CD8-positive, alpha-beta T cell (primary cell): ENCODE measurements at regions of chr21 and their contacts with region 1.

Region 1: GRCh38 chr21:43916691-43917514 is 51.9 kb downstream of the AGPAT3 start:
- DNase-seq: peak; percentile 50 to 90 (median 75)
- ATAC-seq: peak; percentile 83
- H3K4me3 ChIP-seq: peak overlapping the region; percentile 51 to 61
- H3K4me3 Mint-ChIP-seq: peak overlapping the region; percentile 81
- H3K27ac ChIP-seq: peak overlapping the region; percentile 82 to 87
- H3K27ac Mint-ChIP-seq: peak overlapping the region; percentile 94
- H3K4me1 ChIP-seq: peaks cover 44% of the 10 kb centered on the region
- H3K4me1 Mint-ChIP-seq: peaks cover 55% of the 10 kb centered on the region
- H3K27me3 ChIP-seq: peaks cover 0 to 2% of the 10 kb centered on the region in 2 experiments
- H3K27me3 Mint-ChIP-seq: no peaks in the 10 kb centered on the region
- CTCF ChIP-seq: no peak

Region 2: GRCh38 chr21:43758111-43758641 is 158.7 kb before region 1 on chr21:
- CTCF ChIA-PET with region 1: no interaction called
- POLR2A ChIA-PET with region 1: no interaction called
- intact Hi-C with region 1: no loop called
- DNase-seq: no peak
- ATAC-seq: no peak
- H3K4me3 ChIP-seq: no peak overlapping the region
- H3K4me3 Mint-ChIP-seq: no peak overlapping the region
- H3K27ac ChIP-seq: no peak overlapping the region
- H3K27ac Mint-ChIP-seq: no peak overlapping the region
- H3K4me1 ChIP-seq: no peaks in the 10 kb centered on the region
- H3K4me1 Mint-ChIP-seq: no peaks in the 10 kb centered on the region
- H3K27me3 ChIP-seq: no peaks in the 10 kb centered on the region
- H3K27me3 Mint-ChIP-seq: no peaks in the 10 kb centered on the region
- CTCF ChIP-seq: no peak

Region 3: GRCh38 chr21:43810505-43811261 is 106.2 kb before region 1 on chr21:
- CTCF ChIA-PET with region 1: interaction called, 5 read pairs
- POLR2A ChIA-PET with region 1: no interaction called
- intact Hi-C with region 1: loop called in 1 of 2 experiments (anchors 5 kb)
- DNase-seq: peak; percentile 81 to 93 (median 84)
- ATAC-seq: peak; percentile 98
- H3K4me3 ChIP-seq: no peak overlapping the region
- H3K4me3 Mint-ChIP-seq: no peak overlapping the region
- H3K27ac ChIP-seq: no peak overlapping the region
- H3K27ac Mint-ChIP-seq: no peak overlapping the region
- H3K4me1 ChIP-seq: peaks cover 9% of the 10 kb centered on the region
- H3K4me1 Mint-ChIP-seq: peaks cover 7% of the 10 kb centered on the region
- H3K27me3 ChIP-seq: no peaks in the 10 kb centered on the region
- H3K27me3 Mint-ChIP-seq: no peaks in the 10 kb centered on the region
- CTCF ChIP-seq: peak; percentile 86

Region 4: DNA sequence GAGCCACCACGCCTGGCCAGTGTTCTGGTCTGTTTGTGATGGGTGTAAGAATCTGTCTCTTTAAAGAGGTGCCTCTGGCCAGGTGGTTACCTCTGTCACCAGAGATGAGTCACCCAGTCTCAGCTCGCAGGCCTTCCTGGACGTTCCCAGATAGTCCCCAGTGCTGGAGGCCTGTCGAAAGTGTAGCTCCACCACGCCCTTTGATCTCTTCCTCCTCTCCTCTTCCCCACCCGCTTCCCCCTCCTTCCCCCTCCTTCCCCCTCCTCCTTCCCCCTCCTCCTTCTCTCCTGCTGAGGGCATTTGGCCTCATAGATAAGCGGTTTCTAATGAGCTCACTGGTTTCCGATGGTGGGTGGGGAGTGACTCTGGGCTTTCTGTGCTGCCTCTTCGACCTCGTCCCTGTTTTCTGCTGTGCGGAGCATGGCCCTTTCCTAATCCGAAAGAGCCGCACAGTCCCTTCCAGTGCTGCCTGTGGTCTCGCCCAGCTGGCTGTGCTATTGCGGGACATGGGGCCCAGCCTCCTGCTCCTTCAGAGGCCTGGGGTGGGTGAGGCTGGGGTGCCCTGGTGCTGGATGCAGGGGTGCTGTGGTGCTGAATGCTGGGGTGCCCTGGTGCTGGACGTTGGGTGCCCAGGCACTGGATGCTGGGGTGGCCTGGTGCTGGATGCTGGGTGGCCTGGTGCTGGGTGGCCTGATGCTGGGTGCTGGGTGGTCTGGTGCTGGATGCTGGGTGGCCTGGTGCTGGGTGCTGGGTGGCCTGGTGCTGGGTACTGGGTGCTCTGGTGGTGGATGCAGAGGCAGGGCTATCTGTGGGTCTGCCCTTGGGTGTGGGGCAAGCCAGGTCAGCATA is 32.7 kb before region 1 on chr21:
- CTCF ChIA-PET with region 1: no interaction called
- POLR2A ChIA-PET with region 1: interaction called, 3 read pairs
- intact Hi-C with region 1: loop called in 1 of 2 experiments (anchors 5 kb)
- DNase-seq: peak in 1 of 9 experiments; percentile 21
- ATAC-seq: peak; percentile 52
- H3K4me3 ChIP-seq: no peak overlapping the region
- H3K4me3 Mint-ChIP-seq: no peak overlapping the region
- H3K27ac ChIP-seq: no peak overlapping the region
- H3K27ac Mint-ChIP-seq: no peak overlapping the region
- H3K4me1 ChIP-seq: peaks cover 27% of the 10 kb centered on the region
- H3K4me1 Mint-ChIP-seq: peaks cover 54% of the 10 kb centered on the region
- H3K27me3 ChIP-seq: no peaks in the 10 kb centered on the region
- H3K27me3 Mint-ChIP-seq: no peaks in the 10 kb centered on the region
- CTCF ChIP-seq: no peak

Region 5: DNA sequence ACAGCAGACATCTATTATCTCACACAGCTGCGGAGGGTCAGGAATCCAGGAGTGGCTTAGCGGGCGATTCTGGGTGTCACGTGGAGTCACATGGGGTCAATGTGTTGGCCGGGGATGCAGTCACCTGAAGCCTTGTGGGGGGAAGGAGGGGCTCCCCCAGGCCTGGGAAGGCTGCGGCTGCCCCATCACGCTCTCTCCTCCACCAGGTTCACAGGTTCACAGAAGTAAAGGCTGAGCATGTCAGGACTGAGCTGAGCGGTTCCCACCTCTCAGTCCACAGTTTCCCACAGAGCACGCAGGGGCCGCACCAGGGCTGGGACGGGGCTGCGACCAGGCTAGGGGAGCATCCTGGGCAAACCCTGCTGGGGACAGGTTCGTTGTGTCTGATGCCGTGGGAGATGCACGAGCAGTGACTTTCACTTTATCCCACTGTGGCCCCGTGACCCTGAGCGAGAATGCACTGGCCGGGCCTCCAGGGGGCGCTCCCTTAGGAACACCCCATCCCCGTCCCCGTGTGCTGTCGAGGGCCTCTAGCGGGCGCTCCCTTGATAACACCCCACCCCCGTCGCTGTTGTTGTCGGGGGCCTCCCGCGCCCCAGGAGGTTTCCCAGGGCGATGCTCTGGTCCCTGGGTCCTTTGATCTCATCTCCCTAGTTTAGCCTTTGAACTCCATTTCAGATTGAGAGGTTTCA is 22.0 kb after region 1 on chr21:
- CTCF ChIA-PET with region 1: interaction called, 33 read pairs
- POLR2A ChIA-PET with region 1: interaction called, 3 read pairs
- intact Hi-C with region 1: loop called (anchors 1 to 2 kb)
- DNase-seq: peak; percentile 82 to 94 (median 91)
- ATAC-seq: peak; percentile 100
- H3K4me3 ChIP-seq: peak overlapping the region; percentile 57 to 67
- H3K4me3 Mint-ChIP-seq: peak overlapping the region; percentile 91
- H3K27ac ChIP-seq: peak overlapping the region in 1 of 2 experiments; percentile 40
- H3K27ac Mint-ChIP-seq: peak overlapping the region; percentile 85
- H3K4me1 ChIP-seq: peaks cover 14% of the 10 kb centered on the region
- H3K4me1 Mint-ChIP-seq: peaks cover 18% of the 10 kb centered on the region
- H3K27me3 ChIP-seq: no peaks in the 10 kb centered on the region
- H3K27me3 Mint-ChIP-seq: no peaks in the 10 kb centered on the region
- CTCF ChIP-seq: peak; percentile 100